K562 (cell line): ENCODE measurements at regions of chrX and their contacts with region 1.

Region 1: GRCh38 chrX:49043220-49043986 is at the start of gene TFE3:
- DNase-seq: peak; percentile 89 to 99 (median 92)
- ATAC-seq: peak; percentile 90
- H3K4me3 ChIP-seq: peak within 1 kb of the TSS; percentile 97
- H3K27ac ChIP-seq: peak within 1 kb of the TSS; percentile 89
- H3K4me1 ChIP-seq: peaks cover 39 to 42% of the 10 kb centered on the region in 2 experiments; a peak in 4 of 5 replicates
- H3K27me3 ChIP-seq: no peaks in the 10 kb centered on the region
- CTCF ChIP-seq: peak; percentile 76 to 86 (median 84)
- EP300 ChIP-seq: peak; percentile 20; the same call in 1 of the 2 replicates
- POLR2A ChIP-seq: no peak; the same call in 1 of the 2 replicates
- RAD21 ChIP-seq: peak; percentile 68 to 80
- polyA plus RNA-seq, gene TFE3: 1.9 to 3.8 TPM

Region 2: DNA sequence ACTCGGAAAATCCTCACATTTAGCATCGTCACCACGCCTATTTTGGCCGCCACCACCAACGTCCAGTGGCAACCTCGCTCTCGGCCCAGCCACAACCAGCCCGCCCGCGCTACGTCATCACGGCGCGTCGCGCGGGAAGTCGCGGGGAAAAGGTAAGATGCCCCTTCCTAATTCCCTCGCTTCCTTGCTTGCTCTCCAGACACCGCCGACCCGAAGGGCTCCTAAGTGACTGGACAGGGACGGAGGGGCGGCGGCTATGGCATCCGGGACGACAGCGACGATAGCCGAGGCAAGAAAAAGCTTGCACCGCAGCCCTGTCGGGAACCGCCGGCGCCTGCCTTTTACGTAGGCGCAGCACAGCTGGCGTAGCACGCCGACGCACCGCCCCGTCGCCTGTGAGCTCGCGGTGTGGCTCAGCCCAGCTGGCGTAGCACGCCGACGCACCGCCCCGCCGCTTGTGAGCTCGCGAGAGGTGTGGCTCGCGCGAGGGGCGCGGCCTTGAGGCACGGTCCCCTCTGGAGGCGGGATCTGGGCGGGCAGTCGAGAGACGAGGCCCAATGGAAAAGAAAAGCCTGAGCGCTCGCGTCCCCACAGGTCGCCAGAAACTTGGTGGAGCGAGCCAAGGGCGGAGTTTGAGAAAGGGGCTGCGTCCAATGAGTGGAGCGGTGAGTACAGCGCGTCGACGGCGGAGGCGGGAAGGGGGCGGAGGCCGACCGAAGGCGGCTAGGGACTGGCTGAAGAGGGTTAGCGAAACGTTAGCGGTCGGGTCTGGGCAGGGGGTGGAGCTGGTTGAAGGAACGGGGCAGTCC is 241.9 kb before region 1 on chrX and contains the start of gene HDAC6:
- CTCF ChIA-PET with region 1: no interaction called
- POLR2A ChIA-PET with region 1: interaction called, 3 read pairs
- in situ Hi-C with region 1: no loop called
- intact Hi-C with region 1: loop called (anchors 1 kb)
- DNase-seq: peak; percentile 86 to 99 (median 88)
- ATAC-seq: peak; percentile 88
- H3K4me3 ChIP-seq: peak within 1 kb of the TSS; percentile 73
- H3K27ac ChIP-seq: peak within 1 kb of the TSS; percentile 99
- H3K4me1 ChIP-seq: peaks cover 12 to 39% of the 10 kb centered on the region in 2 experiments
- H3K27me3 ChIP-seq: no peaks in the 10 kb centered on the region
- CTCF ChIP-seq: no peak
- EP300 ChIP-seq: no peak
- POLR2A ChIP-seq: no peak
- RAD21 ChIP-seq: no peak
- polyA plus RNA-seq, gene HDAC6: 29.9 to 31.4 TPM

Region 3: GRCh38 chrX:48937054-48937907 is 106.1 kb before region 1 on chrX:
- CTCF ChIA-PET with region 1: no interaction called
- POLR2A ChIA-PET with region 1: no interaction called
- in situ Hi-C with region 1: no loop called
- intact Hi-C with region 1: loop called (anchors 1 kb)
- DNase-seq: peak; percentile 62 to 93 (median 72)
- ATAC-seq: peak; percentile 82
- H3K4me3 ChIP-seq: no peak overlapping the region; the same call in 1 of the 2 replicates
- H3K27ac ChIP-seq: peak overlapping the region; percentile 91
- H3K4me1 ChIP-seq: peaks cover 51 to 61% of the 10 kb centered on the region in 2 experiments
- H3K27me3 ChIP-seq: no peaks in the 10 kb centered on the region
- CTCF ChIP-seq: peak; percentile 55 to 74 (median 63)
- EP300 ChIP-seq: peak; percentile 80
- POLR2A ChIP-seq: no peak
- RAD21 ChIP-seq: peak; percentile 21 to 56; a peak in 3 of 4 replicates

Region 4: GRCh38 chrX:49002091-49002935 is 41.1 kb before region 1 on chrX and contains the start of gene GRIPAP1:
- CTCF ChIA-PET with region 1: no interaction called
- POLR2A ChIA-PET with region 1: interaction called, 4 read pairs
- in situ Hi-C with region 1: no loop called
- intact Hi-C with region 1: loop called (anchors 5 kb)
- DNase-seq: peak; percentile 90 to 92 (median 91)
- ATAC-seq: peak; percentile 90
- H3K4me3 ChIP-seq: peak within 1 kb of the TSS; percentile 80
- H3K27ac ChIP-seq: peak within 1 kb of the TSS; percentile 100
- H3K4me1 ChIP-seq: peaks cover 3 to 6% of the 10 kb centered on the region in 2 experiments; a peak in 2 of 5 replicates
- H3K27me3 ChIP-seq: no peaks in the 10 kb centered on the region
- CTCF ChIP-seq: no peak
- EP300 ChIP-seq: no peak
- POLR2A ChIP-seq: peak; percentile 87
- RAD21 ChIP-seq: no peak
- polyA plus RNA-seq, gene GRIPAP1: 4.1 to 4.6 TPM

Region 5: GRCh38 chrX:49177338-49177833 is 134.0 kb after region 1 on chrX:
- CTCF ChIA-PET with region 1: no interaction called
- POLR2A ChIA-PET with region 1: no interaction called
- in situ Hi-C with region 1: no loop called
- intact Hi-C with region 1: loop called (anchors 5 kb)
- DNase-seq: peak in 2 of 4 experiments; percentile 44 to 69
- ATAC-seq: peak; percentile 67
- H3K4me3 ChIP-seq: no peak overlapping the region
- H3K27ac ChIP-seq: no peak overlapping the region; the same call in 2 of the 3 replicates
- H3K4me1 ChIP-seq: peaks cover 33 to 51% of the 10 kb centered on the region in 2 experiments
- H3K27me3 ChIP-seq: no peaks in the 10 kb centered on the region
- CTCF ChIP-seq: peak; percentile 55 to 59 (median 57)
- EP300 ChIP-seq: no peak
- POLR2A ChIP-seq: no peak
- RAD21 ChIP-seq: peak; percentile 49